ENCODE measurements at regions of chr19 and their contacts with region 1.

Region 1: DNA sequence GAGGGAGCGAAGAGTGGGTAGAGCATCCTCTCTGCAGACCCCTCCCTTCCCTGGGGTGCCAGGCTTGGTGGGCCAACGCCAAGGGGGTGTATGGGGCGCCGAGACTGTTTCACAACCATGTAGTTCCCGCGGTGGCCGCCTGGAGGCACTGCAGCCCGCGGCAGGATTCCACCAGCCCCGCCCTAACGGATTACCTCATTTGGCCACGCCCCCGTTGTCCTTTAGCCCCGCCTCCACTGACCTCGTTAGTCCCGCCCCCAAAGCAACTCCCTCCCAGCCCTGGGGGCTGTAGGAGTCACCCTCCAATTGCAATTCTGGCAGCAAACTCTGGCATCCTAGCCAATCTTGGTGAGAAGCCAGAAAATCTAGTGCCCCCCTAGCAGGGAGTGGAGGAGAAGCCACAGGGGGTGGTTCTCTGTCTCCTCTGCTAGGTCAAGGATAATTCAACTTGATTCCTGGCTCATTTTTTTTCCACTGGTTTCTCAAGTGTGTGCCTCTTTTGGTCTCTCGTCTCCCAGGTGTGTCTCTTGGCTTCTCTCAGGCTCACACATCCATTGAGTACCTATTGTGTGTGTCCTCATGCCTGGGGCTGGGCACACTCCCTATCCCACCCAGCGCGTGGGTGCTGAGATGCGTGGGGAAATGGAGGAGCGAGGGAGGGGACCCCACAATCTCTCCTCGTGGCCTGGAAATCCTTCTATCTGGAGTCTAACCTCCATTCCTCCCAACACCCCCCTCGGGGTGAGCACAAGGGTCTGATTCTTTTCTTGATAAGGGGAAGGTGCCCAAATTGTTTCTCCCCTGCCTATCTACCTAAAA is 2.0 kb downstream of the OLFM2 start:
- DNase-seq: peak; percentile 90
- H3K4me3 ChIP-seq: no peak overlapping the region
- H3K27ac ChIP-seq: no peak overlapping the region
- H3K4me1 ChIP-seq: no peaks in the 10 kb centered on the region
- H3K27me3 ChIP-seq: peaks cover 9% of the 10 kb centered on the region; the same call in 1 of the 2 replicates

Region 2: GRCh38 chr19:9986787-9987281 is 52.5 kb after region 1 on chr19:
- in situ Hi-C with region 1: no loop called
- DNase-seq: peak; percentile 81
- H3K4me3 ChIP-seq: peak overlapping the region; percentile 29; the same call in 1 of the 2 replicates
- H3K27ac ChIP-seq: peak overlapping the region; percentile 70
- H3K4me1 ChIP-seq: peaks cover 13% of the 10 kb centered on the region
- H3K27me3 ChIP-seq: no peaks in the 10 kb centered on the region

Region 3: DNA sequence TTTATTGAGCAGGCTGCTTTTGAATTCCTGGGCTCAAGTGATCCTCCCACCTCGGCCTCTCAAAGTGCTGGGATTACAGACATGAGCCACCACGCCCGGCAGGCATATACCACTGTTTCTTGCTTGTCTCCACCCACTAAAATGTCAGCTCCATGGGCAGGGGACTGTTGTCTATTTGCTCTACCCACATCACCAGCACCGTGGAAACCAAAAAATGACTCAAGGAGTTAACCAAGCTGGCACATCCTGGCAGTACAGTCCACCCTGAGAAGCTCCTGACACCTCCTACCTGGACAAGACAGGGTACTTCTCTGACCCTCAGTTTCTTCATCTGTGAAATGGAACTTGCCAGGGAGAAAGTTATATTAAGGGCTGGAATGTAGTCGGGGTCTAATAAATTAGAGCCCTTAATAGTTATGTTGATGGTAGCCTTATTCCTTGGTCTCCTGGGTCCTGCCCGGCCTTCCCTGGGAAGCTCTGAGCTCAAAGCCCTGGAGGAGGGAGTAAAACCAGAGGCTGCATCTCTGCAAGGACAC is 92.9 kb after region 1 on chr19:
- in situ Hi-C with region 1: loop called (anchors 10 kb)
- DNase-seq: peak; percentile 34
- H3K4me3 ChIP-seq: peak overlapping the region; percentile 29; the same call in 1 of the 2 replicates
- H3K27ac ChIP-seq: no peak overlapping the region
- H3K4me1 ChIP-seq: peaks cover 5% of the 10 kb centered on the region; the same call in 1 of the 2 replicates
- H3K27me3 ChIP-seq: 0 out of 2 replicates have a peak, but pooled peaks cover 2% of the 10 kb centered on the region

Region 4: DNA sequence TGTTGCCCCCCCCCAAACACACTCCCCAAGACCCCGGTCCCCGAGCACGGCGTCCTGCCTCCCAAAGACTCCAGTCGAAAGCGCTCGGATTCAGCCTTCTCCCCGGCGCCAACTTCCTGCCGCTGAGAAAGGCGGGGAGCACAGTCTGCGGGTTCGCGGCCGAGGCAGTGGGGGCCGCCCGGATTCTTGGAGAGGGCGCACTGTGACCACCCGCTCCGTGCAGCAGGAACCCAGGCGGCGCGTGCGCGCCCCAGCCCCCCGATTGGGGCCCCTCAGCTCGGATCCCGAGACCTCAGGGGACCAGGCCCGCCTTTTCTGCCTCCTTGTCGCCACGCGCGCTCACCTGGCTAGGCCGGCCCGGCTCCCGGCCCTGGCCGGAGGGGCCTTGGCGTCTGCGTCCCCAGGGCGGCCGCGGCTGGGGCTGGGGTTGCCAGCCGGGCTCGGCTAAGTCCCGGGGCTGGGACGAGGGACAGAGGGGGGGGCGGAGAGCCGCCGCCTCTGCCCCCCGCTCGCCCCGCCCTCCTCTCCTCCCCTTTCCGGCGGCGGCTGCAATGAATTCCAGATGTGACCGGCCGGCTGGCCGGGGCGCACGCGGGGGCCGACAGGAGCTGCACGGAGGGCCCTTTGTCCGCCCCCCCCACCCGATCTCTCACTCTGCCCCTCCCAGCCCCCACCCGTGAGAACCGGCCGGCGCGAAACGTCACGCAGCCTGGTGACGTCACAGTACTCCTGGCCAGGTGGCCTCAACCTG is 296.7 kb after region 1 on chr19 and contains the start of gene S1PR2:
- in situ Hi-C with region 1: loop called (anchors 25 kb)
- DNase-seq: peak; percentile 91
- H3K4me3 ChIP-seq: peak within 1 kb of the TSS; percentile 92
- H3K27ac ChIP-seq: peak within 1 kb of the TSS; percentile 77
- H3K4me1 ChIP-seq: peaks cover 5% of the 10 kb centered on the region
- H3K27me3 ChIP-seq: no peaks in the 10 kb centered on the region
- total RNA-seq, gene S1PR2: 20.3 and 24.9 TPM in 2 replicates

Region 5: DNA sequence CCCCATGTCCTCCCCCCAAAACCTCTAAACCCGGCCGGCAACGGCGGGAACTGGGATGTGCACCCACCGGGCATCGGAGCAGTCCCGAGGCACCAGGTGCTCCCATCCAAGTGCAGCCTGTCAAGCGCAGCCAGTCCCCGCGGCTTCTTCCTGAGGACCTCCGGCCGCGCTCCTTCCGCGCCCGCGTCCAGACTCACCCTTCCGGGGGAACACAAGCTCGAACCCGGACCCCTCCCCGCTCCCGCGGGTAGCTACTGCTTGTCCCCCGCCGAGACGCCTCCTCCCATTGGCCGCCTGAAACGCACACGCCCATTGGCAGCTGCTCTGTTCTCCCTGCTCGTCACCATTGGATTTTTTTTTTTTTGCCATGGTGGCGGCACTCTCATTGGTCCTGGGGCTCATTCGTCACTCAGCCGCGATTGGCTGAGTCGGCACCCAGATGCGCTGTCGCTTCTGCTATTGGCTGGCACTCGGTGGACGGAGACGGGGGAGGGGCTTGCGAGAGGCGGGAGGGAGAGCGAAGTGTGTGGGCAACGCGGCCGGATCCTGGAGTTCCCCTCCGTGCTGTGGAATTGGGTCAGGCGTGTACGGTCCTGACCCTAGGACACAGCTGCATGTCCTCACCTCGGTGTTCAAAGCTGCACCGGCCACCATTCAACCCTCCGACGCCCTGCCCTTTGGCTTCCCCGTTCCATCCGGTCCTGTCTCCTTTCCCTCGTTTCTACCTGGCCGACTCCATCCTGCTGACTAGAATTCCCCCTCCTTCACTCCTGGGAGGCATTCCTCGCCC is 446.2 kb after region 1 on chr19 and contains the start of gene TYK2:
- in situ Hi-C with region 1: loop called (anchors 25 kb)
- DNase-seq: peak; percentile 99
- H3K4me3 ChIP-seq: peak within 1 kb of the TSS; percentile 85
- H3K27ac ChIP-seq: peak within 1 kb of the TSS; percentile 16
- H3K4me1 ChIP-seq: no peaks in the 10 kb centered on the region
- H3K27me3 ChIP-seq: no peaks in the 10 kb centered on the region
- total RNA-seq, gene TYK2: 64.1 and 85.5 TPM in 2 replicates